ENCODE measurements at regions of chr7 and their contacts with region 1.

Region 1: DNA sequence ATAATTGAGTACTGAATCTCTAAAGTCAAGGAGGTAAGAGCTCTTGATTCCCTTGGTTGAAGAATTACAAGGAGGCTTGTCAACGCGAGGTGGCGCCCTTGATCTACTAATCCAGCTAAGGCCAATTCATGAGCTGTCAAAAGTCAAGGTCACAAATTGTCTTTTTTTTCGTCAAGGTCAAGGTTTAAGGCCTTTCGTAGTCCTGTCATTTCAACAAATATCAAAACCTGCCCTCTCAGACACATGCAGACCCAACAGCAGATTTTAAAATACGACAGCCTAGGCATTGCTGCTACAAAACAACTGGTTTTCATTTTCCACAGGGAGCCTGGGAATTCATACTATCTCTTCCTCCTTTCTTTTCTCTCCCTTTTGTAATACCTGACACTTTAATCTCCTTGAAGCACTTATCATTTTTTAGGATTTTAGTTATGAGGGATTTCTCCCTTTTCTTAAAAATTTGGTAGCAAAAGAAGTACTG is 3.6 kb downstream of the HOXA13 start:
- DNase-seq: peak; percentile 61
- CTCF ChIP-seq: peak; percentile 77

Region 2: DNA sequence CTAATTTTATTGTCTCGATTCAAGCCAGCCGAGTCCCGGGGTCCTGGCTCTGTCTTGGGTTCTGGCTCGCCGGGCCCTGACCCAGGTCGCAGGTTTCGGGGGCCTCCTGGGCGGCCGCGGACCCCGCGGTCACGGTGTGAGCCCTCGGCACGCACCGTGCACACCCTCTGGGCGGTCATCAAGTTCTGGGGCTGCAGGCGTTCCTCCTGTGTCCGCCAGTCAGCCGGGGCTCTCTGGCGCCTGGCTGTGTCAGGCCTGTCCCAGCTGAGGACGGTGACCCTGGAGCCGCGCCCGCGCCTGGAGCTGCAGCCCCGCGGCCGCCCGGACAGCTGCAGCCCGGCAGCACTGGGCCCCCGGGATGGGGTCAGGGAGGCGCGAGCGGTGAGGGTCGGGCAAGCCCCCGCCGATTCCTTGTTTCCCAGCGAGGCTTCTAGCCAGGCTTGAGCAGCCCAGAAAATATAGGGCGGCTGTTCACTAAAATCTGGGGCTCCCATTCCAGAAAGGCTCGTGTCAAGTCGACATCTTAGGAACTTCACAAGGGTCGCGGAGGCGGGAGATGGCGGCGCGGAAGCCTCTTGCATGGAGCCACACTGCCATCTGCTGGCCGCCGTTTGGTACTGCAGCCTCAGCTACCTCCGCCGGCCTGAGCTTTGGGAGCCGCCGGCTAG is 35.6 kb before region 1 on chr7:
- CTCF ChIA-PET with region 1: interaction called, 11 read pairs
- POLR2A ChIA-PET with region 1: no interaction called
- DNase-seq: peak; percentile 87
- CTCF ChIP-seq: peak; percentile 97

Region 3: GRCh38 chr7:27210441-27211083 is 14.2 kb after region 1 on chr7:
- CTCF ChIA-PET with region 1: interaction called, 12 read pairs
- POLR2A ChIA-PET with region 1: no interaction called
- DNase-seq: peak; percentile 72
- CTCF ChIP-seq: peak; percentile 73

Region 4: DNA sequence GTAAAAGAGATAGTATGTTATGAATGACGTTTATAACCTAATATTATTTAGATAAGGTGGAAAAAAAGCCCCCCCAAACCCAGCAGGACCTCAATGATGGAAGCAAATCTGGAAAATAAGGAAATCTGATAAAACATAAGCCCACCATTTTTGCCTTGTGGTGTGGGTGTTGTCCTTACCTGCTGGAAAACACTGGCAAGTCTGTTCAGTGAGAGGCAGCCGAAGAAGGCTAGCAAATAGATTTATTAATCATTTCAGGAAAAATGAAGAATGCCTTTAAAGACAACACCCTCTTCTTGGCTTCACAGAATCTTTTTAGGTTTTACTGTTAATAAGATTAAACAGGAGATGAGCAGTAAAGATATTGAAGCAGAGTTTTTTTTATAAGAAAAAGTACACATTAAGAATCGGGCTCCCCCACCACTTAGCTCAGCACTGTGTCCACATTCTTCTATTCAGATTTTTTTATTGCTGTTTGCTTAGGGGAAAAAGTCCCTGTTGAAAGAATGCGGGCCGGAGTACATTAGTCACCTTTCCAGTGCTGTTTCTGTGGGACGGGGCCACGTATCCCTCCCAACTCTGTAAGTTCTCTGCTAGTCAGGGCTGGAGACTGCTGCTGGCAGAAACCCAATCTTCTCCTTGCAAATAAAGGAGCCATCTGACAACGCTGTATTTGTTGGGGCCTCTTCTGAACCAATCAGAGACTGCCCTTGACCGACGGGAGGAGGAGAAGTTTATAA is 150.4 kb after region 1 on chr7:
- CTCF ChIA-PET with region 1: no interaction called
- POLR2A ChIA-PET with region 1: no interaction called
- DNase-seq: no peak
- CTCF ChIP-seq: no peak

Region 5: DNA sequence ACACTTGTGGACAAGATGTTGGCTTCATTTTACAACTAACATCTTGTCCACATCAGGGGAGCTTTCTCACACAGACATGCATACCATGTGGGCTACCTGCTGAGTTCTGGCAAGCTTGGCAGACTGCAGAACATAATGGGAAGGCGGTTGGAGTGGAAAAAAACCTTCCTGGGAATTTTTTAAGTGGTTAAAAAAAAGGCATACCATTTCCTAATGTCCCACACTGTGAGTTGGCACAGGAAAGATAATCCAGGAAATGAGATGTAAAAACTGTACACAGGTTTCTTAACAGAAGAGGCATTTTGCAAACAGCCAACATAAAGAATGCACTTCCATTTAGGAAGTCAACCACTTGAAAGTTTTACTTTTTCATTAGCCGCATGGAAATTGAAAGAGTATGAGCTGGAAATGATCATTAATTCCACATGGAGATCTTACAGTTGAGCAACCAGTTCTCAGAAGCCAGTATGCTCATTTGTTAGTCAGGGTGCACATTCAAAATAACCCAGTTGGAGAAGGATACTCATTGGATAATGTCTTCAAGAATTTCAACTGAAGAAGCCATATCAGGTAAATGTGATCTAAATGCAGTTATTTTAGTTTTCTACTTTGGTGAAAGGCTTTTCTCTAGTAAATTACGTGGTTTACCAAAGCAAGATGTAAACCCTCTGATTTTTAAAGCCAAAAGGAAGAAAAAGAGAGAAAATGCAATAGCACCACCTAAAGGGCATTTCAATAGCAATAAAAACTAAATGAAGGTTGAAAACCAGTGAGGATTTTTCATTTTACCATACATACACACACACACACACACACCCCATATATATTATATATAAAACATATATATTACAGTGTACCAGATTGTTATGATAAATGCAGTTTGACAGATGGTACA is 737.6 kb after region 1 on chr7:
- CTCF ChIA-PET with region 1: interaction called, 15 read pairs
- POLR2A ChIA-PET with region 1: no interaction called
- DNase-seq: no peak
- CTCF ChIP-seq: peak; percentile 16

Region 6: DNA sequence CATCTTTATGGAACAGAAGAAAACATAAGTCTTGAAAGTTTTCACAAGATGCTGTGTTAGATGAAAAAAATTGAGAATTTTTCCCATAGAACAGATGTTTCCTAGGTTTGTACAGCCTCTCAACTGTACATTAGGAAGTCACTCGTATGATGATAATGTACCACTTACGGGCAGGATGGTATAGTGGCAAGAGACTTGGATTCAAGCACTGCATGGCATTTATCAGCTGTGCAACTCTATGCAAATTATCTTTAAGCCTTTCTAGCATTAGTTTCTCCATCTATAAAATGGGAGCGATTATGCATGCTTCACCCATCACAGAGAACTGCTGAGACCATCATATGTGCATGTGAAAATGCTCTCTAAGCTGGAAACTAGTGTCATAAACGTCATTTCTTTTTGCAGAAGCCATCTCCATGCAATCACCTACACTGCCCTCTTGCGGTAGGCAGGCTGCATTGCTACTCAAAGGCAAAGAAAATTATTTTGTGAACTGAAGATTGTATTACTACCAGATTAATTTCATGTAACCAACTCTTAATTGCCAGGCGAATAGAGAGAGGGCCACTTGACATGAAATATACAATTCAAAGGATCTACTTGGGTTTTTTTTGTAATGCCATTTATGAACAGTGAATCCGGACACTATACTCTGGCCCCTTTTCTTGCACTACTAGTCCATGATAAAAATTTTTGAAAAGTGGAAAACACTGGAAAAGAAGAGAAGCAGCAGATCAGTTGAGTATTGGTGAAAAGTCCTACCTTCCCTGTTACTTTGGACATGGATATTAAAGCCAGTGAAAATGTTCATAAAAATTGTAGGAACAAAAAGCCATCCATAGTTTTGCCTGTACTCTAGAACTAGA is 881.9 kb after region 1 on chr7:
- CTCF ChIA-PET with region 1: interaction called, 19 read pairs
- POLR2A ChIA-PET with region 1: no interaction called
- DNase-seq: peak; percentile 46
- CTCF ChIP-seq: peak; percentile 99